Dendritic cell treated with granulocyte-macrophage colony-stimulating factor and Interleukin-4, amounts not matched to agents 40 ng/mL and 50 ng/mL, for 4 days (primary cell): ENCODE measurements at regions of chr7 and their contacts with region 1.

Region 1: DNA sequence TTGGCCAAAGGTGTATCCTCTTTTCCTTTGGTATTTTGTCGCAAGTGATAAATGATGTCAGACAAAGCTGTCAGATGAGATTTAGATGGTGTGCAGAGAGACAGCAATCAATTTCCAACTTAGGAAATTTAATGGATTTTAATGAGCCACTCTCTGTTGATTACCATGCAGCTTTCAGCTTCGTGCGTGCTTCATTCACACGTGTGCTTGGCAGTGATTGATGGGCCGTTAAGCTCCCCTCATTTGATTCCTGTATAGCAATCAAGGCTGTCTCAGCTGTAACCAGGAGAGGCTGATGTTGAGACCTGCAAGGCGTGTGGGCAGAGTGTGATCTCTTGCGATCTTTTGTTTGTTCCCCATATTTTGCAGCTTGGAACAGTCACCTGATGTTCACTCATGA is 439.6 kb downstream of the CALN1 start:
- H3K4me3 Mint-ChIP-seq: no peak overlapping the region
- H3K27ac Mint-ChIP-seq: no peak overlapping the region
- H3K4me1 Mint-ChIP-seq: no peaks in the 10 kb centered on the region
- H3K27me3 Mint-ChIP-seq: no peaks in the 10 kb centered on the region

Region 2: GRCh38 chr7:71995111-71995510 is 22.6 kb after region 1 on chr7:
- intact Hi-C with region 1: loop called (anchors 2 kb)
- H3K4me3 Mint-ChIP-seq: no peak overlapping the region
- H3K27ac Mint-ChIP-seq: no peak overlapping the region
- H3K4me1 Mint-ChIP-seq: no peaks in the 10 kb centered on the region
- H3K27me3 Mint-ChIP-seq: no peaks in the 10 kb centered on the region